B cell (primary cell): ENCODE measurements at regions of chr7 and their contacts with region 1.

Region 1: DNA sequence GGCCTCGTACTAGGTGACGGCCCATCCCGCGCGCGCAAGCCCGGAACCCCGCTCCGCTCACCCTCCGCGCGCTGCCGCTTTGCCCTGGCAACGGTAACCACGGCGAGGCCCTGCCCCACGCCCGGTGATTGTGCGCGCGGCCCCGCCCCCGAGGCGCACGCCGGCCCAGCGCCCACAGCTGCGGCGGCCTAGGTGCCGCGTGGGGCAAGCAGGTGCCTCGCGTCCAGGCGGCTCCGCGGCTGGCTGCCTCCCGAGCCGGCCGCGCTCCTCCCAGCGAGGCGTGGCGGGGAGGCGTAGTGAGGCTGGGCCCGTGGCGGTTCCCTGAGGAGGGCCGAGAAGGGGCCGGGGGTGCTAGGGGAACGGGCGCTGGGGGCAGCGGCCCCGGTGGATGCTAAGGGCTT is at the start of gene SMKR1:
- DNase-seq: peak; percentile 98
- ATAC-seq: peak; percentile 89
- H3K4me3 ChIP-seq: peak within 1 kb of the TSS; percentile 54 to 77 (median 66)
- H3K4me3 Mint-ChIP-seq: peak within 1 kb of the TSS; percentile 90
- H3K27ac ChIP-seq: peak within 1 kb of the TSS; percentile 72
- H3K27ac Mint-ChIP-seq: peak within 1 kb of the TSS; percentile 89
- H3K4me1 ChIP-seq: peaks cover 14 to 32% of the 10 kb centered on the region in 2 donors
- H3K4me1 Mint-ChIP-seq: peaks cover 22% of the 10 kb centered on the region
- H3K27me3 ChIP-seq: no peaks in the 10 kb centered on the region
- H3K27me3 Mint-ChIP-seq: no peaks in the 10 kb centered on the region
- CTCF ChIP-seq: no peak
- total RNA-seq, gene SMKR1: 2.9 and 3.8 TPM in 2 replicates

Region 2: DNA sequence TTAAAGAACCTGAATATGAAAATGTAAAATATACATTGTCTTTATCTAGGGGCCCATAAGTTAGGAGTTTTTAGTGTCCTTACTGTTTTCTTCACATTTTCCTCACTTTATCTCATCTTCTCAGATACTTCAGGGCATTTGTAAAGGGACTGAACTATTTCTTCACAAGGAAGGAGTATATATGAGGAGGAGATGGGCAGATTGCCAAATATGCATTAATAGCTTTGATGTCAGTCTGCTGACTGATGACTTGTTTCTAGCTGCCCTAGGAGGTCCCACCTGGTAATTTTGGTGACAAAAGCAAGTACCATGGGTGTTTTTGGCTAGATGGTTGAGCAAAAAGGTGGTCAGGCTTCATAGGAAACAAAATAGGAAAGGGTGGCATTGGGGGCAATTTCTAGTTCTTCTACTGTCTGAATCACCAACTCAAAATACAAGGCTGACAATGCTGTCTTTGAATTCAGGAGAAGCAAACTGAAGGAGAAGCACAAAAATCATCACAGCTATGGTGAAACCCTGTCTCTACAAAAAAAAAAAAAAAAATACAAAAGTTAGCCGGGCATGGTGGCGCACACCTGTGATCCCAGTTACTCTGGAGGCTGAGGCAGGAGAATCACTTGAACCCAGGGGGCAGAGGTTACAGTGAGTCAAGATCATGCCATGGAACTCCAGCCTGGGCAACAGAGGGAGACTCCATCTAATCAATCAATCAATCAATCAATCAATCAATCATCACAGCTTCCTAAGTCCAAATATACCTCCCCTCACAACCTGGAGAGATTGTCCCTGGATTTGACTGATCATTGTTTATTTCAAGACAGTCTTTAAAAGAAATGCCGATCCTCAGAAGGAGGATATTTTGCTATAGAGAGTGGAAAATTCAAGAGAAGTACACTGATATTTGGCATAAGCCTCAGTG is 78.4 kb before region 1 on chr7:
- CTCF ChIA-PET with region 1: no interaction called
- POLR2A ChIA-PET with region 1: no interaction called
- intact Hi-C with region 1: no loop called
- DNase-seq: no peak
- ATAC-seq: no peak
- H3K4me3 ChIP-seq: no peak overlapping the region
- H3K4me3 Mint-ChIP-seq: no peak overlapping the region
- H3K27ac ChIP-seq: no peak overlapping the region
- H3K27ac Mint-ChIP-seq: no peak overlapping the region
- H3K4me1 ChIP-seq: no peaks in the 10 kb centered on the region
- H3K4me1 Mint-ChIP-seq: no peaks in the 10 kb centered on the region
- H3K27me3 ChIP-seq: no peaks in the 10 kb centered on the region
- H3K27me3 Mint-ChIP-seq: no peaks in the 10 kb centered on the region
- CTCF ChIP-seq: no peak

Region 3: GRCh38 chr7:129480674-129481365 is 21.6 kb before region 1 on chr7:
- CTCF ChIA-PET with region 1: no interaction called
- POLR2A ChIA-PET with region 1: no interaction called
- intact Hi-C with region 1: no loop called
- DNase-seq: no peak
- ATAC-seq: no peak
- H3K4me3 ChIP-seq: no peak overlapping the region
- H3K4me3 Mint-ChIP-seq: no peak overlapping the region
- H3K27ac ChIP-seq: no peak overlapping the region
- H3K27ac Mint-ChIP-seq: no peak overlapping the region
- H3K4me1 ChIP-seq: no peaks in the 10 kb centered on the region
- H3K4me1 Mint-ChIP-seq: peaks cover 2% of the 10 kb centered on the region
- H3K27me3 ChIP-seq: no peaks in the 10 kb centered on the region
- H3K27me3 Mint-ChIP-seq: no peaks in the 10 kb centered on the region
- CTCF ChIP-seq: no peak

Region 4: GRCh38 chr7:129611246-129612111 is 109.1 kb after region 1 on chr7 and contains the start of gene NRF1:
- CTCF ChIA-PET with region 1: interaction called, 4 read pairs
- POLR2A ChIA-PET with region 1: no interaction called
- intact Hi-C with region 1: loop called (anchors 1 kb)
- DNase-seq: peak; percentile 96
- ATAC-seq: peak; percentile 87
- H3K4me3 ChIP-seq: peak within 1 kb of the TSS; percentile 70 to 97 (median 84)
- H3K4me3 Mint-ChIP-seq: peak within 1 kb of the TSS; percentile 97
- H3K27ac ChIP-seq: peak within 1 kb of the TSS; percentile 91 to 93
- H3K27ac Mint-ChIP-seq: peak within 1 kb of the TSS; percentile 97
- H3K4me1 ChIP-seq: peaks cover 47 to 53% of the 10 kb centered on the region in 2 donors
- H3K4me1 Mint-ChIP-seq: peaks cover 67% of the 10 kb centered on the region
- H3K27me3 ChIP-seq: no peaks in the 10 kb centered on the region
- H3K27me3 Mint-ChIP-seq: no peaks in the 10 kb centered on the region
- CTCF ChIP-seq: no peak
- total RNA-seq, gene NRF1: 49.2 and 53.0 TPM in 2 replicates

Region 5: DNA sequence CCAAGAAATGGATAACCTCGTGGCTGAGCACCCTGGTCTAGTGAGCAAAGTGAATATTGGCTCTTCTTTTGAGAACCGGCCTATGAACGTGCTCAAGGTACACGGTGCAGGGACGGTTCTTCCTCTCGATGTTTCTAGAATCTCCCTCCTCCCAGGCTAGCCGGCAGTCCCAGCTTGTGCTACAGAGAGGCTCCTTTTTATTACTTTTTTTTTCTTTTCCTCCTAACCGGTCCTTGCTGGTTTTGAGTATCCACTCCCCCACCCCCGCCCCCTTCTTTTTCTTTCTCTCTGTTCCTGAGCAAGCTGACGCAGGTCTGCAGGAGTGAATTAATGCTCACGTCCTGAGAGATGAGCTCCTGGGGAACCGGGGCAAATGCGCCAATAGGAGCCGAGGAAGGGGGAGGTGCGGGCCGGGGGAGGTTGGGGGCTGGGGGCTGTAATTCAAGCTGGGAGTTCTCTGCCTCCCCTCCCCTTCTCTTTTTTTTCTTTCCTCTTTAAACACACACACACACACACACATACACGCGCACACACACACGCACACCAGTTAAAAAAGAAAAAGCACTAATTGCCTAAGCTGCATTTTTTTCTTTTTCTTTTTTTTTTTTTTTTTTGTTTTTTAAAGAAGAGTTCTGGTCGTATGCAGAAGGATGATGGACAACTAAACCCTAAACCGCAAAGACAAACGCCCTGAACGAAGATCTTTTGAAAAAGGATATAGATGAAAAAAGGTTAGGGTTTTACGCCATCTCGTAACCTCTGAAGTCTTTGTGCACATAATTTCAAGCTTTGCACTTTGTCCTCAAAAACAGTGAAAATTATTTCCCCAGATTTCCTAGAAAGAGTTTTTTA is 770.9 kb after region 1 on chr7:
- CTCF ChIA-PET with region 1: no interaction called
- POLR2A ChIA-PET with region 1: no interaction called
- intact Hi-C with region 1: no loop called
- DNase-seq: no peak
- ATAC-seq: no peak
- H3K4me3 ChIP-seq: no peak overlapping the region
- H3K4me3 Mint-ChIP-seq: no peak overlapping the region
- H3K27ac ChIP-seq: no peak overlapping the region
- H3K27ac Mint-ChIP-seq: no peak overlapping the region
- H3K4me1 ChIP-seq: peaks cover 0 to 2% of the 10 kb centered on the region in 2 donors
- H3K4me1 Mint-ChIP-seq: no peaks in the 10 kb centered on the region
- H3K27me3 ChIP-seq: peaks cover 0 to 12% (median 6%) of the 10 kb centered on the region in 4 experiments
- H3K27me3 Mint-ChIP-seq: peaks cover 31% of the 10 kb centered on the region
- CTCF ChIP-seq: no peak